WTC11 (cell line): ENCODE measurements at regions of chr7 and their contacts with region 1.

Region 1: GRCh38 chr7:29345600-29345999 is 151.0 kb downstream of the CHN2 start:
- DNase-seq: peak; percentile 66
- ATAC-seq: peak; percentile 90
- H3K4me3 Mint-ChIP-seq: no peak overlapping the region
- H3K27ac Mint-ChIP-seq: no peak overlapping the region
- H3K4me1 Mint-ChIP-seq: no peaks in the 10 kb centered on the region
- H3K27me3 Mint-ChIP-seq: peaks cover 4% of the 10 kb centered on the region; the same call in 1 of the 2 replicates
- CTCF ChIP-seq: 0 out of 2 replicates have a peak, but pooled peaks have one; percentile 18

Region 2: GRCh38 chr7:28808796-28809527 is 536.6 kb before region 1 on chr7:
- CTCF ChIA-PET with region 1: no interaction called
- POLR2A ChIA-PET with region 1: interaction called, 10 read pairs
- DNase-seq: peak; percentile 72
- ATAC-seq: peak; percentile 91
- H3K4me3 Mint-ChIP-seq: no peak overlapping the region
- H3K27ac Mint-ChIP-seq: no peak overlapping the region
- H3K4me1 Mint-ChIP-seq: peaks cover 5% of the 10 kb centered on the region
- H3K27me3 Mint-ChIP-seq: no peaks in the 10 kb centered on the region
- CTCF ChIP-seq: no peak

Region 3: DNA sequence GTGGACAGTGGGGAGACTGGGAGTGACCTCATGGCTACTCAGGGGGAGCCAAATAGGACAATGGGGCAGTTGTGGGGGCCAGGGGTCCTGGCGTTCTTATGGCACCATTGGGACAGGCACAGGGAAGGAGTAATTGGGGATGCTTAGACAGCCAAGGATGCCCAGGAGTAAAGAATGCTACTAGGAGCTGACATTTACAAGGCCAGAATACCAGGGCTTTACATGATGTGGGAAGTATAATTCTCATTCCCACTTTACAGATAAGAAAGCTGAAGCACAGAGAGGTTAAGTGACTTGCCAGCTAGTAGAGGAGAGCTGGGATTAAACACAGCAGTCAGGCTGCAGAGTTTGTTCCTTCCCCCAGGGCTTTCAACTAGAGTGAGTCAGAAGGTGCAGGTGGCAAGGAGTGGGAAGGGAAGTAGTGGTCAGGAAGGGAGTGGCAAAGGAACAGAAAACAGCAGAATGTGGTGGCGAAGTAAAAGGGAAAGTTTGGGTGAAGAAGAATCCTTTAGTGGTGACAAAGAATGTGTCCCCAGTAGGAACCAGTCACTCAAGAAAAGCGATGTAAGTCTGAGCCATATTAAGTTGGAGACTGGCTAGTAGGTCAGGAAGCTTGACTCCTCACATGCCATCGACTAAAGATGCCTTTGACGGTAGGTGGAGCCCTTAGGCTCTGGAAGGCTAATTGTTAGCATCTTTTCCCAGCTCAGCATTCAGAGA is 232.1 kb before region 1 on chr7:
- CTCF ChIA-PET with region 1: interaction called, 21 read pairs
- POLR2A ChIA-PET with region 1: no interaction called
- DNase-seq: peak; percentile 28
- ATAC-seq: peak; percentile 92
- H3K4me3 Mint-ChIP-seq: no peak overlapping the region
- H3K27ac Mint-ChIP-seq: peak overlapping the region; percentile 66
- H3K4me1 Mint-ChIP-seq: peaks cover 33% of the 10 kb centered on the region
- H3K27me3 Mint-ChIP-seq: no peaks in the 10 kb centered on the region
- CTCF ChIP-seq: no peak